Aorta (tissue), 5 donors: ENCODE measurements at regions of chr7 and their contacts with region 1.

Region 1: GRCh38 chr7:111763221-111763801 is 201.0 kb upstream of the IMMP2L start:
- DNase-seq: no peak
- ATAC-seq: peak; percentile 72
- H3K4me3 ChIP-seq: no peak overlapping the region
- H3K27ac ChIP-seq: no peak overlapping the region
- H3K4me1 ChIP-seq: no peaks in the 10 kb centered on the region
- H3K27me3 ChIP-seq: no peaks in the 10 kb centered on the region

Region 2: DNA sequence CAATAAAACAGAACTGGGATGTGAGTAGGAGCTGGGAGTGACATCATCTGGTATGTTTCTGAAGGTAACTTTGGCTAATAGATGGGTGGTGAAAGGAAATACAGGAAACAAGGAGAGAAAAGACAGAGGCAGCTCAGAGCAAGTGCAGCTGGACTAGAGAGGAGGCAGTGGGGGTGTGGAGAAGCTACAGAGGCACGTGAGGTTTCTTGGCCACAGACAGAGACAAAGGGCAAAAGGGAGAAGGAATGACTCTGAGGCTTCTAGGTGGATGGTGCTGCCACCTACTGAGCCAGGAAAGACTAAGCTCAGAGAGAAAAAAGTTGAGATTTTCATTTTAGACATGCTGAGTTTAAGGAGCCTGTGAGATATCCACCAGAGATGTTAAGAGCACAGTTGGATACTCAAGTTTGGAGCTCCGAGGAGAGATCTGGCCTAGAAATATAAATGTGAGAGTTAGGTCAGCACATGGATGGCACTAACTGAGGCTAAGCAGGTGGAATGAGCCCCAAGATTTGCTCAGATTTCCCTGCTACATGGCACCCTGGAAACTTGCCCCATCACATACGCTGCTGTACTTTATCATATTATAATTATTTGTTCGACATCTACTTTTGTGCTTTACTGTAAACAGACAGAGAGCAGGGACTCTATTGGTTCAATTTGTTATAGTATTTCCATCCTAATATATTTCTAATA is 92.0 kb after region 1 on chr7:
- intact Hi-C with region 1: loop called (anchors 1 to 5 kb)
- DNase-seq: no peak
- ATAC-seq: peak; percentile 71
- H3K4me3 ChIP-seq: no peak overlapping the region
- H3K27ac ChIP-seq: no peak overlapping the region
- H3K4me1 ChIP-seq: no peaks in the 10 kb centered on the region
- H3K27me3 ChIP-seq: no peaks in the 10 kb centered on the region

Region 3: DNA sequence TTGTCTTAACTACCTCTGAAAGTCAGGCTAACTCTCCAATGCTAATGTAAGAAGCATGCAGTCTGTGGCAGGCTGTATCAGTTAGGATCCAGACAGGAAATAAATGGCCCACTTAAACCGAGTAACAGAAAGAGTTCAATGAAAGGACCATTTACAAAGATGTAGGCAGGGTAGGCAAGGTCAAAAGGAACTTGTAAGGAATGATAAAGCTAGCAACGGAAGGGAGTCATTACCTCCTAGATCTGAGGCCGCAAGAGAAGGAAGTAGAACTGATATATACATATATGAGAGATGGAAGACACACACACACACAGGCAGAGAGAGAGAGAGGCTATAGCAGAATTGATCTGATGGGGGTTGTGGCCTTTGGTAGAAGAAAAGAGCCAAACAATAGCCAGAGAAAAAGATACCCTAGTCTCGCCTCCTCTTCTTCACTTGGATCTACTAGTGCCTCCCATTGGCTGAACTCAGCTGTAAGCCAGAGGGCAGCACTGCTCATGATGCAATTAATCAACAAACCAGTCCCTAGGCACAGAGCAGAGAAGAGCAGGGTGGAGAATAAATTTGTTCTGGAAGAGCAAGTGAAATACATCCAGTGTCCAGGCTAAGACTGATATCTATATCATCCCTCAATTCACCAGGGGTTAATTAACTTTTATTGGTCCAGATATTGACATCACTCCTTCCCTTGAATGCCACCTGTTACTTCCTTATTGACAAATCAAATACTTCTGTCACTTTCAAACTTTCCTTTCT is 808.7 kb after region 1 on chr7:
- intact Hi-C with region 1: no loop called
- DNase-seq: no peak
- ATAC-seq: no peak
- H3K4me3 ChIP-seq: no peak overlapping the region
- H3K27ac ChIP-seq: no peak overlapping the region
- H3K4me1 ChIP-seq: no peaks in the 10 kb centered on the region
- H3K27me3 ChIP-seq: no peaks in the 10 kb centered on the region